HCT116 (cell line): ENCODE measurements at regions of chr19 and their contacts with region 1.

Region 1: GRCh38 chr19:45405435-45406225 is 761 bp upstream of the PPP1R13L start:
- DNase-seq: peak; percentile 92
- ATAC-seq: peak; percentile 64
- H3K4me3 ChIP-seq: peak overlapping the region; percentile 83 to 99
- H3K27ac ChIP-seq: peak overlapping the region; percentile 87
- H3K4me1 ChIP-seq: peaks cover 19 to 53% of the 10 kb centered on the region in 2 experiments
- H3K27me3 ChIP-seq: no peaks in the 10 kb centered on the region
- CTCF ChIP-seq: no peak
- POLR2A ChIP-seq: peak; percentile 42
- RAD21 ChIP-seq: no peak

Region 2: GRCh38 chr19:45306518-45307027 is 99.1 kb before region 1 on chr19:
- CTCF ChIA-PET with region 1: no interaction called
- POLR2A ChIA-PET with region 1: no interaction called
- RAD21 ChIA-PET with region 1: no interaction called
- intact Hi-C with region 1: no loop called
- DNase-seq: no peak
- ATAC-seq: no peak
- H3K4me3 ChIP-seq: no peak overlapping the region
- H3K27ac ChIP-seq: no peak overlapping the region
- H3K4me1 ChIP-seq: peaks cover 10 to 16% of the 10 kb centered on the region in 2 experiments
- H3K27me3 ChIP-seq: no peaks in the 10 kb centered on the region
- CTCF ChIP-seq: no peak
- POLR2A ChIP-seq: no peak
- RAD21 ChIP-seq: no peak

Region 3: DNA sequence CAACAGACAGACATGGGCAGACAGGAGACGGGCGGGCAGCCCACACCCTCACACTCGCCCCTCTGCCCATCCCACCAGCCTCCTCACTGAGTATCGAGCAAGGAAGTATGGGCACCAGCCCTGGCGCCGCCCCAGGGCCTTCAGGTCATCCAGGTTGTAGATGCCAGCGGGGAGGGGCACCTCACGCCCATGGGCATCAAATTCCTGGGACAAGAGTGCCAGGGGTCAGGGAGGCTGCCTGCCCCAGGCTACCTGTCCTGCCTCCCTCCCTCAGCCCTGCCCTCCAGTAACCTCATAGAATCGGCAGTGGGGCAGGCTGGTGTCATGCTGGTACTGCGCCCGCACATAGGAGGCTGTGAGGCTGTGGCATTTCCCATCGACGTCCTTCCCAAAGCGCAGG is 40.9 kb before region 1 on chr19:
- CTCF ChIA-PET with region 1: no interaction called
- POLR2A ChIA-PET with region 1: no interaction called
- RAD21 ChIA-PET with region 1: no interaction called
- intact Hi-C with region 1: no loop called
- DNase-seq: no peak
- ATAC-seq: no peak
- H3K4me3 ChIP-seq: no peak overlapping the region
- H3K27ac ChIP-seq: no peak overlapping the region
- H3K4me1 ChIP-seq: peaks cover 0 to 12% of the 10 kb centered on the region in 2 experiments; a peak in 2 of 4 replicates
- H3K27me3 ChIP-seq: no peaks in the 10 kb centered on the region
- CTCF ChIP-seq: no peak
- POLR2A ChIP-seq: no peak
- RAD21 ChIP-seq: no peak

Region 4: GRCh38 chr19:45391340-45391739 is 14.3 kb before region 1 on chr19:
- CTCF ChIA-PET with region 1: interaction called, 13 read pairs
- POLR2A ChIA-PET with region 1: interaction called, 9 read pairs
- RAD21 ChIA-PET with region 1: no interaction called
- intact Hi-C with region 1: no loop called
- DNase-seq: no peak
- ATAC-seq: peak; percentile 89
- H3K4me3 ChIP-seq: no peak overlapping the region
- H3K27ac ChIP-seq: no peak overlapping the region
- H3K4me1 ChIP-seq: no peaks in the 10 kb centered on the region
- H3K27me3 ChIP-seq: no peaks in the 10 kb centered on the region
- CTCF ChIP-seq: no peak
- POLR2A ChIP-seq: no peak
- RAD21 ChIP-seq: no peak

Region 5: GRCh38 chr19:45478454-45479238 is 73.0 kb after region 1 on chr19:
- CTCF ChIA-PET with region 1: interaction called, 42 read pairs
- POLR2A ChIA-PET with region 1: interaction called, 6 read pairs
- RAD21 ChIA-PET with region 1: interaction called, 4 to 6 read pairs
- intact Hi-C with region 1: loop called (anchors 1 kb)
- DNase-seq: peak; percentile 95
- ATAC-seq: peak; percentile 95
- H3K4me3 ChIP-seq: peak overlapping the region; percentile 37 to 53
- H3K27ac ChIP-seq: peak overlapping the region; percentile 71
- H3K4me1 ChIP-seq: peaks cover 5 to 24% of the 10 kb centered on the region in 2 experiments; a peak in 3 of 4 replicates
- H3K27me3 ChIP-seq: no peaks in the 10 kb centered on the region
- CTCF ChIP-seq: peak; percentile 91 to 99 (median 98)
- POLR2A ChIP-seq: peak; percentile 80
- RAD21 ChIP-seq: peak; percentile 97

Region 6: DNA sequence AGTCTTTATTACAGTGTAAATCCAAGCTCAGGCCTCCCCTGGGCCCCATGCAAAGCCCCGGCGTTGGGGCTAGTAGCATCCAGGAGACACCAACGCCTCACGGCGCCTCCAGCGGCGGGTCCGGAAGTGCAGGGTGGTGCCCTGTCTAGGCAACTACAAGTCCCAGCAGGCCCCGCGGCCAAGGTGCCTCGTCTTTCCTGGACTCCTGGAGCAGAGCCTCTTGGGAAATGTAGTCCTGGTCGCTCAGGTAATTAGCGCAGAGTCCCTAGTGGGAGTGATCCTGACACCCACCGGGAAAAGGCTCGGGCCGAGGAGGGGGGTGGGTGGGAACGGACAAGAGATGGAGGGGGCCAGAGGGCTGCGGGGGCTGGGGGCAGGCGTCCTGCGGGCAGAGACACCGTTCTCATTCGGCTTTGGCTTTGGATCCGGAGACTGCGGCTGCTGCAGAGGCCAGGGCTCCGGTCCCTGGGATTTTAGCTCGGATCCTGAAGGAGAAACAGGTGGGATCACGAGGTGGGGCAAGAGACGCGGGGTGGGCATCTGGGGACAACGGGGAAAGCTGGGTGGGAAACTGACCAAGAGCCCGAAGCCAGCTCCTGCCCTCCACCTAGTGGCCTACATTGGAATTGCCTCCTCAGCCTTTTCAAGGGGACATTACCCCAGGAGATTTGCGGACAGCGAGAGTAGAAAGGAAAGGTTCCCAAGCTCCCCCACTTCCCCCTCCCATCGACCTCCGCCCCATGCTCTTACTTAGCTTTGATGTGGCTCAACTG is 79.9 kb after region 1 on chr19:
- CTCF ChIA-PET with region 1: interaction called, 18 read pairs
- POLR2A ChIA-PET with region 1: interaction called, 3 read pairs
- RAD21 ChIA-PET with region 1: interaction called in 1 of 2 experiments, 3 read pairs
- intact Hi-C with region 1: no loop called
- DNase-seq: peak; percentile 91
- ATAC-seq: peak; percentile 95
- H3K4me3 ChIP-seq: peak overlapping the region; percentile 41 to 51
- H3K27ac ChIP-seq: peak overlapping the region; percentile 44; the same call in 1 of the 2 replicates
- H3K4me1 ChIP-seq: peaks cover 13 to 28% of the 10 kb centered on the region in 2 experiments
- H3K27me3 ChIP-seq: no peaks in the 10 kb centered on the region
- CTCF ChIP-seq: peak; percentile 68 to 94 (median 86)
- POLR2A ChIP-seq: no peak
- RAD21 ChIP-seq: peak; percentile 64